ENCODE measurements at regions of chr1 and their contacts with region 1.

Region 1: DNA sequence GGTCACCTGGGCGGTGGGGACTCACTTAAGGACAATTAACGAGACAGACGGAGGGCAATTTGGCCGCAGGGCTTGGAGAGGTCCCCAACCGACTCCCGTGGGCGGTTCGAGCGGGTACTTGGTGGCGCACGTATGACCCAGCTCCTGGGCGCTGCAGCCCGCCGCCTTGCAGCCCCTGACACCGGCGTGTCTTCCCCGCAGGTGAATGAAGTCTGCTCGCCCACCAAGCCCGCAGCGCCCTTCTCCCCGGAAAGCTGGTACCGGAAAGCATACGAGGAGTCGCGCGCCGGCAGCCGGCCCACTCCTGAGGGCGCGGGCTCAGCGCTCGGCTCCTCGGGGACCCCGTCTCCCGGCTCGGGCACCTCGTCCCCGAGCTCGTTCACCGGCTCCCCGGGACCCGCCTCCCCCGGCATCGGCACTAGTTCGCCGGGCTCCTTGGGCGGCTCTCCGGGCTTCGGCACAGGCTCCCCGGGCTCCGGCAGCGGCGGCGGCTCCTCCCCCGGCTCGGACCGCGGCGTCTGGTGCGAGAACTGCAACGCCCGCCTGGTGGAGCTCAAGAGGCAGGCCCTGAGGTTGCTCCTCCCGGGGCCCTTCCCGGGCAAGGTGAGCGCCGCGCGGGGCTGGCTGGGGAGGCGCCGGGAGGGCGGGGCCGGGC is 1.4 kb downstream of the KIF26B start:
- DNase-seq: peak; percentile 95

Region 2: GRCh38 chr1:246002725-246003441 is 846.7 kb after region 1 on chr1:
- intact Hi-C with region 1: loop called (anchors 5 to 10 kb)
- DNase-seq: peak; percentile 95

Region 3: GRCh38 chr1:246497331-246497915 is 1341.2 kb after region 1 on chr1:
- intact Hi-C with region 1: loop called in 1 of 2 experiments (anchors 2 kb)
- DNase-seq: no peak

Measured in posterior vena cava (tissue), 2 donors.